Right cardiac atrium (tissue), 5 donors: ENCODE measurements at regions of chr18 and their contacts with region 1.

Region 1: GRCh38 chr18:11553098-11553940 is 56.1 kb upstream of the SLC35G4 start:
- DNase-seq: no peak
- ATAC-seq: peak; percentile 53 to 60
- H3K4me3 ChIP-seq: no peak overlapping the region
- H3K27ac ChIP-seq: no peak overlapping the region
- H3K4me1 ChIP-seq: no peaks in the 10 kb centered on the region
- H3K27me3 ChIP-seq: no peaks in the 10 kb centered on the region

Region 2: GRCh38 chr18:10565835-10566234 is 987.5 kb before region 1 on chr18:
- intact Hi-C with region 1: loop called in 1 of 4 experiments (anchors 5 kb)
- DNase-seq: no peak
- ATAC-seq: no peak
- H3K4me3 ChIP-seq: no peak overlapping the region
- H3K27ac ChIP-seq: no peak overlapping the region
- H3K4me1 ChIP-seq: no peaks in the 10 kb centered on the region
- H3K27me3 ChIP-seq: no peaks in the 10 kb centered on the region

Region 3: DNA sequence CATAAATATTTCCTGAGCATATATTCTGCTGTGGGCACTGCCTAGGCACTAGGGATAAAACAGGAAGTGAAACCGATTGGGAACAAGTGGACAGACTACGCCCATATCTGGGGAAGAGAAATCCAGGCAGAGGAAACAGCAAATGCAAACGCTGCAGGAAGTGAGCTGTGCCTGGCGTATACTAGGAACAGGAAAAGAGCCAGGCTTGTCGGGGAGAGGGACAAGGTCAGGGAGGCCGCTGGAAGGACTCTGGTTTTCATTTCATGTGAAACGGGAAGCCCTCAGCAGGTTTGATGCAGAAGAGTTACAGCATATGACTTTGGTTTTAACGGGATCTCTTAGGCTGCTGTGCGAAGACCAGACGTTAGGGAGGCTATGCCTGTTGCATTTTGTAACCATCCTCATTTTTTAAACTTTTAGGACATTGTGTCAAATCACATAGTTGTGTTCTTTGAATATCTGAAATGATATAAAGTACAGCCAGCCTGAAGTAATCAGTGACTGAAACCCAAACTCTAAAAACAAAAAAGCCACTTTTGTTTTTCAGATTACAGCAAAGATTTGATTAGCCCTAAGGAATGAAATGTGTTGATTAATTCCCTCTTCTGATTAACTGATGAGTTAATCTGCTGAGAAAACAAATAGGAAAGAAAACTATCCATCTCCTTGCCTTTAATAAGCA is 293.7 kb before region 1 on chr18:
- intact Hi-C with region 1: no loop called
- DNase-seq: peak; percentile 57 to 82 (median 69)
- ATAC-seq: peak; percentile 93 to 96
- H3K4me3 ChIP-seq: no peak overlapping the region
- H3K27ac ChIP-seq: no peak overlapping the region
- H3K4me1 ChIP-seq: no peaks in the 10 kb centered on the region
- H3K27me3 ChIP-seq: no peaks in the 10 kb centered on the region